ENCODE measurements at regions of chr12 and their contacts with region 1.

Region 1: GRCh38 chr12:10540776-10541205 is 35.1 kb downstream of the EIF2S3B start:
- DNase-seq: no peak
- H3K4me3 Mint-ChIP-seq: no peak overlapping the region
- H3K27ac Mint-ChIP-seq: peak overlapping the region; percentile 22
- H3K4me1 Mint-ChIP-seq: peaks cover 15% of the 10 kb centered on the region
- H3K27me3 Mint-ChIP-seq: peaks cover 36% of the 10 kb centered on the region

Region 2: GRCh38 chr12:10130042-10130441 is 410.7 kb before region 1 on chr12 and contains the start of gene CLEC7A:
- CTCF ChIA-PET with region 1: no interaction called
- intact Hi-C with region 1: loop called (anchors 1 kb)
- DNase-seq: no peak
- H3K4me3 Mint-ChIP-seq: no peak within 1 kb of the TSS
- H3K27ac Mint-ChIP-seq: no peak within 1 kb of the TSS
- H3K4me1 Mint-ChIP-seq: peaks cover 16% of the 10 kb centered on the region
- H3K27me3 Mint-ChIP-seq: peaks cover 8% of the 10 kb centered on the region
- total RNA-seq, gene CLEC7A: not detected

Region 3: GRCh38 chr12:10320643-10321042 is 220.1 kb before region 1 on chr12:
- CTCF ChIA-PET with region 1: no interaction called
- intact Hi-C with region 1: loop called (anchors 1 kb)
- DNase-seq: no peak
- H3K4me3 Mint-ChIP-seq: no peak overlapping the region
- H3K27ac Mint-ChIP-seq: peak overlapping the region; percentile 2
- H3K4me1 Mint-ChIP-seq: peaks cover 28% of the 10 kb centered on the region
- H3K27me3 Mint-ChIP-seq: no peaks in the 10 kb centered on the region

Region 4: DNA sequence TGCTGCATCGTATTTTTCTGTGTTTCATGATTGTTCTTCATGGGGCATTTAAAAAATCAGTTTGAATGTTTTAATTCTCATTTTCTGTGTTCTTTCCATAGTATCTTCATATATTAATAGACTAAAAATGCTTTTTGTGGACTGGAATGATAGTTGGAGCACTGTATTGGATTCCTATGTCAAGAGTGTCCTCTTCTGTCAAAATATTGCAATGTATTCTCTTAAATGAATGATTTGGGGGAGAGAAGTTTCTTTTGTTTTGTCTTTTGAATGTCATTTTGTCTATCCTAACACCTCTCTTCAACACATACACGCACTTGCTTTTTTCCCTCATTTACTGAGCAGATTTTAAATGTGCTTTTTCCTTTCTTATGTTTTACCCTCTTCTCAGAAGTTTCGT is 39.8 kb before region 1 on chr12:
- CTCF ChIA-PET with region 1: no interaction called
- intact Hi-C with region 1: loop called (anchors 1 kb)
- DNase-seq: no peak
- H3K4me3 Mint-ChIP-seq: no peak overlapping the region
- H3K27ac Mint-ChIP-seq: no peak overlapping the region
- H3K4me1 Mint-ChIP-seq: peaks cover 16% of the 10 kb centered on the region
- H3K27me3 Mint-ChIP-seq: peaks cover 19% of the 10 kb centered on the region

Region 5: GRCh38 chr12:10690906-10691305 is 150.1 kb after region 1 on chr12:
- CTCF ChIA-PET with region 1: no interaction called
- intact Hi-C with region 1: no loop called
- DNase-seq: no peak
- H3K4me3 Mint-ChIP-seq: no peak overlapping the region
- H3K27ac Mint-ChIP-seq: no peak overlapping the region
- H3K4me1 Mint-ChIP-seq: no peaks in the 10 kb centered on the region
- H3K27me3 Mint-ChIP-seq: peaks cover 2% of the 10 kb centered on the region